Activated CD4-positive, alpha-beta T cell treated with anti-CD3 and anti-CD28 coated beads for 36 hours (primary cell): ENCODE measurements at regions of chr10 and their contacts with region 1.

Region 1: GRCh38 chr10:130110246-130111112 is at the start of gene C10orf143:
- DNase-seq: peak; percentile 97
- ATAC-seq: peak; percentile 80
- H3K4me3 Mint-ChIP-seq: peak within 1 kb of the TSS; percentile 90
- H3K27ac Mint-ChIP-seq: peak within 1 kb of the TSS; percentile 98
- H3K4me1 Mint-ChIP-seq: peaks cover 45% of the 10 kb centered on the region
- H3K27me3 Mint-ChIP-seq: no peaks in the 10 kb centered on the region
- total RNA-seq, gene C10orf143: 4.0 to 5.4 TPM

Region 2: GRCh38 chr10:128125944-128126764 is 1984.3 kb before region 1 on chr10 and contains the start of gene MKI67:
- CTCF ChIA-PET with region 1: no interaction called
- POLR2A ChIA-PET with region 1: no interaction called
- intact Hi-C with region 1: loop called in 1 of 2 experiments (anchors 2 kb)
- DNase-seq: peak; percentile 96
- ATAC-seq: peak; percentile 93
- H3K4me3 Mint-ChIP-seq: peak within 1 kb of the TSS; percentile 93
- H3K27ac Mint-ChIP-seq: peak within 1 kb of the TSS; percentile 90
- H3K4me1 Mint-ChIP-seq: peaks cover 27% of the 10 kb centered on the region
- H3K27me3 Mint-ChIP-seq: peaks cover 13% of the 10 kb centered on the region
- total RNA-seq, gene MKI67: 234 to 244 TPM

Region 3: GRCh38 chr10:129963641-129964501 is 146.6 kb before region 1 on chr10 and contains the start of gene EBF3:
- CTCF ChIA-PET with region 1: interaction called, 5 read pairs
- POLR2A ChIA-PET with region 1: no interaction called
- intact Hi-C with region 1: loop called (anchors 5 kb)
- DNase-seq: peak; percentile 69
- ATAC-seq: peak; percentile 72
- H3K4me3 Mint-ChIP-seq: peak within 1 kb of the TSS; percentile 49
- H3K27ac Mint-ChIP-seq: no peak within 1 kb of the TSS
- H3K4me1 Mint-ChIP-seq: peaks cover 18% of the 10 kb centered on the region
- H3K27me3 Mint-ChIP-seq: peaks cover 57% of the 10 kb centered on the region
- total RNA-seq, gene EBF3: not detected

Region 4: DNA sequence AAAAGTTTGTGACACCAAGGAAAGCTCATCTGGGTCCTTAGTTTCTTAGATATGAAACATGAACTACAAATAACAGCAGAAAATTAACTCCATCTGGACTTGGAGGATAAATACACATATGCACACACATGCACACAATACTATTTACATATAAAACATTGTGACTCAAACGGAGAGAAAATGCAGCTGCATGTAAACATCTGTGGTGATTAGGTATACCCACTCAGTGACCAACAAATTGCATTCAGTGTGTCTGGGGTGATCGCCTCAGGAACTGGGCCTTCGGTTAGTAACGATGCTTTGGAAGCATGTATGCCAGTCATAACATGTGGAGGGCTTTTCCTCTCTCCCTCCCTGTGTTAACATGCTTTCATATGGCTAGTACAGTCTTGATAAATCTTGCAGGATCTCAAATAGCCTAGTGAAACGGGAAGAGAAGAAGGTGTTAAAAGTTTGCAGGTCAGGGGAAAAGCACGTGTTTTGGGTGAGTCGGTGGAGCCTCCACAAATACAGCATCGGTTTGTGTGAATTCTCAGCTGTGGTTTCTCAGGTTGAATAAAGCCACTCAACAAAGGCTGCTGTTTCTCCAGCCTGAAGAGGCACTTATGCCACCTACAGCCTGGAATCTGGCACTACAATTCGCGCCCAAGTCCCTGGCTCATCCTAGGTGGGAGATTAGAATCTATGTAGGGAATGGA is 17.0 kb after region 1 on chr10:
- CTCF ChIA-PET with region 1: interaction called, 33 read pairs
- POLR2A ChIA-PET with region 1: interaction called, 8 read pairs
- intact Hi-C with region 1: loop called in 1 of 2 experiments (anchors 1 kb)
- DNase-seq: peak; percentile 75
- ATAC-seq: peak; percentile 97
- H3K4me3 Mint-ChIP-seq: no peak overlapping the region
- H3K27ac Mint-ChIP-seq: no peak overlapping the region
- H3K4me1 Mint-ChIP-seq: peaks cover 7% of the 10 kb centered on the region
- H3K27me3 Mint-ChIP-seq: peaks cover 18% of the 10 kb centered on the region

Region 5: GRCh38 chr10:130179640-130180039 is 69.2 kb after region 1 on chr10:
- CTCF ChIA-PET with region 1: interaction called, 8 read pairs
- POLR2A ChIA-PET with region 1: no interaction called
- intact Hi-C with region 1: loop called (anchors 1 to 2 kb)
- DNase-seq: peak; percentile 70
- ATAC-seq: peak; percentile 84
- H3K4me3 Mint-ChIP-seq: no peak overlapping the region
- H3K27ac Mint-ChIP-seq: peak overlapping the region; percentile 59
- H3K4me1 Mint-ChIP-seq: peaks cover 14% of the 10 kb centered on the region
- H3K27me3 Mint-ChIP-seq: no peaks in the 10 kb centered on the region

Region 6: GRCh38 chr10:131900350-131901146 is 1790.1 kb after region 1 on chr10 and contains the start of gene PPP2R2D:
- CTCF ChIA-PET with region 1: interaction called, 4 read pairs
- POLR2A ChIA-PET with region 1: no interaction called
- intact Hi-C with region 1: loop called in 1 of 2 experiments (anchors 1 kb)
- DNase-seq: peak; percentile 97
- ATAC-seq: peak; percentile 83
- H3K4me3 Mint-ChIP-seq: peak within 1 kb of the TSS; percentile 93
- H3K27ac Mint-ChIP-seq: peak within 1 kb of the TSS; percentile 92
- H3K4me1 Mint-ChIP-seq: peaks cover 53% of the 10 kb centered on the region
- H3K27me3 Mint-ChIP-seq: peaks cover 7% of the 10 kb centered on the region
- total RNA-seq, gene PPP2R2D: 30.0 to 39.3 TPM